ENCODE measurements at regions of chr12 and their contacts with region 1.

Region 1: DNA sequence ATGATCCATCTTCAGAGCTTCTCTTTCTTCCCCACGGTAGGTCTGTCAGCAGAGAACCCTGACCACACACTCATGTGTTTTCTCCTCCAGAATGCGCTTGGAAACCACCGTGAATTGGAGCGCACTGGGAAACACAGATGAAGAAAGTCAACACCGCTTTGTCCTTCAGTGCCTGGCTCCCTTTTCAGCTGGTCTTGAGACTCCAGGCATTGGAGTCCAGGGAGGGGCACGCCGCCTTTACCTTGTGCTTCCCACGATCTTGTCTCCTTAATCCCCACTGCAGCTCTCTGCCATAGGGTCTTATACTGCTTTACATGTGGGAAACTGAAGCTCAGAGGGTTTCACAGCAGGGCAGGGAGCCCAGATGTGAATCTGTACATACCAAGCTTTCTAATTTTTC is 1.1 kb downstream of the FAM90A1 start:
- DNase-seq: no peak
- H3K4me3 ChIP-seq: no peak overlapping the region
- H3K27ac ChIP-seq: no peak overlapping the region
- H3K4me1 ChIP-seq: no peaks in the 10 kb centered on the region
- H3K27me3 ChIP-seq: no peaks in the 10 kb centered on the region
- CTCF ChIP-seq: no peak

Region 2: DNA sequence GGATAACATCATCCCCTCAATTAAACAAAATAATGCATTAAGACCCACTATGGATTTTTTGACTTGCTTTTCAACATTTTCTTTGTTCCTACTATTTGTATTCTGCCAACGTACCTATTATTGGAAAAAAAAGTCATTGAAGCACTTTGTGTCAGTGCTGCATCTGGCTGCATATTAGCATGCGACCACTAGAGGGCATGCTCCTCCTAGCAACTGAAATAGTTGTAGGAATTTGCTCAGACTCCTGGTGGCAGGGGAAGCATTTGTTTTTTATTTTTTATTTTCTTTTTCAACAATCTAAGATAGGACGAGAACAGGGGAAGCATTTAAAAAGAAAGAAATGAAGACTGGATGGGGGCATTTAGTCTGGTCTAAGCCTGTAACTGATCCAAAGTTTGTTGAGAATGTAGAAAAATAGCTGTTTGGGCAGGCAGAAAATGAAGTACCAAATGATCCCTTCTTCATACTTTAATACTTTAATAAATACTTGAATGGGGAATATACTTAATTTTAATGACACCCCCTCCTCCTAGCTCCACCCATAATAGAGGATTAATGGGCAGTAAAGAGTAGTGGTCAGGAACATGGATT is 117.5 kb before region 1 on chr12:
- intact Hi-C with region 1: loop called (anchors 2 kb)
- DNase-seq: peak in 1 of 2 donors; percentile 82
- H3K4me3 ChIP-seq: no peak overlapping the region
- H3K27ac ChIP-seq: no peak overlapping the region
- H3K4me1 ChIP-seq: no peaks in the 10 kb centered on the region
- H3K27me3 ChIP-seq: no peaks in the 10 kb centered on the region
- CTCF ChIP-seq: peak; percentile 74 to 94 (median 94)

Measured in ascending aorta (tissue), 2 donors.